HepG2 (cell line): ENCODE measurements at regions of chr3 and their contacts with region 1.

Region 1: GRCh38 chr3:49339945-49340800 is at the start of gene USP4:
- DNase-seq: peak; percentile 89
- ATAC-seq: peak; percentile 92
- H3K4me3 ChIP-seq: peak within 1 kb of the TSS; percentile 76 to 90 (median 82)
- H3K27ac ChIP-seq: peak within 1 kb of the TSS; percentile 93
- H3K4me1 ChIP-seq: peaks cover 44% of the 10 kb centered on the region
- H3K27me3 ChIP-seq: no peaks in the 10 kb centered on the region
- CTCF ChIP-seq: peak; percentile 84
- EP300 ChIP-seq: peak in 1 of 2 experiments; percentile 16; a peak in 1 of 4 replicates
- POLR2A ChIP-seq: peak; percentile 63 to 78
- RAD21 ChIP-seq: peak; percentile 79
- total RNA-seq, gene USP4: 9.2 and 12.1 TPM in 2 replicates

Region 2: GRCh38 chr3:49171119-49171774 is 168.9 kb before region 1 on chr3 and contains the start of gene KLHDC8B:
- CTCF ChIA-PET with region 1: interaction called, 5 read pairs
- POLR2A ChIA-PET with region 1: interaction called, 19 read pairs
- in situ Hi-C with region 1: no loop called
- intact Hi-C with region 1: no loop called
- DNase-seq: peak; percentile 82
- ATAC-seq: peak; percentile 82
- H3K4me3 ChIP-seq: peak within 1 kb of the TSS; percentile 80 to 89 (median 80)
- H3K27ac ChIP-seq: peak within 1 kb of the TSS; percentile 60
- H3K4me1 ChIP-seq: peaks cover 60% of the 10 kb centered on the region
- H3K27me3 ChIP-seq: no peaks in the 10 kb centered on the region; a peak in 1 of 5 replicates
- CTCF ChIP-seq: peak; percentile 93
- EP300 ChIP-seq: no peak
- POLR2A ChIP-seq: no peak
- RAD21 ChIP-seq: peak; percentile 90
- total RNA-seq, gene KLHDC8B: 17.2 and 17.7 TPM in 2 replicates

Region 3: DNA sequence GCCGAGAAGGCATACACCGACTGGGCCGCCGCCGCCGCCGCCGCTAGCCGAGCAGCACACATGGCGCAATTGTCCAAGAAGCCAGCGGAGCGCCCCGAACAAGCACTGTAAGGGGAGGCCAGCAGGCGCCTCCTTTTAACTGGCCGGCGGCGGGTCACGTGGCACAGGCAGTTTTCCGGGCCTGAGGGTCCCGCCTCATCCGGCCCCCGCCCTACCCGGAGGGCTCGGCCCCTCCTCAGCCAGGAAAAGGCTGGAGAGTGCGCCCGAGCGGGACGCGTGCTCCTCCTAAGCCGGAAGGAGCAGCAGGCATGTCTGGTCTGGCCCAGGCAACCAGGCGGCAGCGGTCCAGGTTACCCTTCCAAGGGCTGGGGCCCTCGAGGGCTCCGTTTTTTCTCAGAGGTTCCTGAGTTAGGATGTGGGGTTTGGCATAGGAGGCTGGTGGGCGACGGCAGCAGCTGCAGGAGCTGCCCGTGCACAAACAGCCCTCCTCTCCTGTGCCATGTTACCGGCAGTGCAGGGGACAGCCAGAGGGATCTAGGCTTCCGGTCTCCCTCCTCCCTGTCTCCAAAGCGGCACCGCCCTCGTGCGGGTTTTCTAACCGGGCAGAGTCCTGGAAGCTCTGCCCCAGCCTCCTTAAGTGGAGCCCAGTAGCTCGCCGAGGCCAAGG is 18.2 kb after region 1 on chr3 and contains the start of gene GPX1:
- CTCF ChIA-PET with region 1: interaction called, 6 read pairs
- POLR2A ChIA-PET with region 1: interaction called, 134 read pairs
- in situ Hi-C with region 1: no loop called
- intact Hi-C with region 1: loop called (anchors 1 kb)
- DNase-seq: peak; percentile 92
- ATAC-seq: peak; percentile 93
- H3K4me3 ChIP-seq: peak within 1 kb of the TSS; percentile 62 to 73 (median 63)
- H3K27ac ChIP-seq: peak within 1 kb of the TSS; percentile 94
- H3K4me1 ChIP-seq: peaks cover 37% of the 10 kb centered on the region
- H3K27me3 ChIP-seq: no peaks in the 10 kb centered on the region
- CTCF ChIP-seq: peak; percentile 32; the same call in 1 of the 2 replicates
- EP300 ChIP-seq: no peak
- POLR2A ChIP-seq: peak; percentile 86
- RAD21 ChIP-seq: peak; percentile 32; the same call in 1 of the 2 replicates
- total RNA-seq, gene GPX1: 149 and 169 TPM in 2 replicates

Region 4: DNA sequence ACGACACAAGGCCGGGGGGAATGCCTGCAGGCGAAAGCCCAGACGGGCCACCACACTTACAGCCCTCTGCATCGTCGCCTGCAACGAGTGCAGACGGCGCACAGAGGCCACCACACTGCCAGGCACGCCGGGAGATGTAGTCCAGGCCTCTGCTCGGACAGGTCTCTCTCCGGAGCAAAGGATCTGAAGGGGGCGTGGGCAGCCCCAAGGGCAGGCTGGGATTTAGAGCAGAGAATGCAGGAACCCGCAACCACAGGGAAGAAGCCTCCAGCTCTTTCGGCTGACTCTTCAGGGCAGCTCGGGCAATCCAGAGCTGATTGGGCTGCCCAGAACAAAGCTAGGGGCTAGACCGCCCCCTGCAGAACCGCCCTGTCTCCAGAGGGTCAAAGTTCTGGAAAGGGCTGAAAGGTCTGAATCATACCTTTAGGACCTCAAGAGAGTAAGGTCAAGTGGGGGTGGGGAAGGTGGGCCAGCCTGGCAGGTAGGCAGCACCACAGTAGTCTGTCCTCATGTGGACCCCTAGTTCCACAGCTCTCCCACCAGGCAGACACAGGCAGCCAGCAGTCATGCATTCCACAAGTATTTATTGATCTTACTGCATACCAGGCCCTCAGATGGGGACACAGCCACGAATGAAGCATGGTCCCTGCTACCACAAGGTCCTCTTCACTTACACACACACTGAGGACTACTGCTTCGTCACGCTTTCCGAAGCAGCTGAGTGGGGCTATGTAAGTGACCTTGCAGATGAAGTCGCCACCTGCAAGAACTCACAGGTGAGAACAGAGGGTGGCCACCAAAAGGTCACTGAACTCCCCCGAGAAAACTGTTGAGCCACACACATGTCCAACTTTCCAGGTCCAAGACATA is 82.4 kb after region 1 on chr3 and contains the start of gene AMT:
- CTCF ChIA-PET with region 1: interaction called, 3 read pairs
- POLR2A ChIA-PET with region 1: interaction called, 33 read pairs
- in situ Hi-C with region 1: loop called (anchors 25 kb)
- intact Hi-C with region 1: no loop called
- DNase-seq: peak; percentile 83
- ATAC-seq: peak; percentile 91
- H3K4me3 ChIP-seq: peak within 1 kb of the TSS; percentile 60 to 89 (median 64)
- H3K27ac ChIP-seq: peak within 1 kb of the TSS; percentile 89
- H3K4me1 ChIP-seq: peaks cover 55% of the 10 kb centered on the region
- H3K27me3 ChIP-seq: no peaks in the 10 kb centered on the region
- CTCF ChIP-seq: peak; percentile 30; the same call in 1 of the 2 replicates
- EP300 ChIP-seq: peak in 1 of 2 experiments; percentile 47; a peak in 2 of 4 replicates
- POLR2A ChIP-seq: peak; percentile 61 to 75; a peak in 2 of 4 replicates
- RAD21 ChIP-seq: no peak; the same call in 1 of the 2 replicates
- total RNA-seq, gene AMT: 32.5 and 35.3 TPM in 2 replicates

Region 5: DNA sequence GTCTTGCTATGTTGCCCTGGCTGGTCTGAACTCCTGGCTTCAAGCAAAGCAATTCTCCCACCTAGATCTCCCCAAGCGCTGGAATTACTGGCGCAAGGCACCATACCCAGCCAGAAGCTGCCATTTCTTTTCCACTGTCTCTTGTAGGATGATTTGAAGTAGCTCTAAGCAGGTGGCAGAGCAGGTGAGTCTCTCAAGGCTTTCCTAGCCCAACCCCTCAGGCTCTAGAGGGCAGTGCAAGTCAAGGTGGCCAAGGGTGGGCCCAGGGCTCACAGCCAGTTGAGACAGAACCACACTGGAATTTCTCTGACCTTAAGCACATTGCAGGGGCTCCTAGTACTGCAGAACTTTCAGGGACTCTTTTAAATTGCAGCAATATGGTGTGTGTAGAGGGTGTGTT is 114.3 kb after region 1 on chr3:
- CTCF ChIA-PET with region 1: interaction called, 7 read pairs
- POLR2A ChIA-PET with region 1: interaction called, 18 read pairs
- in situ Hi-C with region 1: loop called (anchors 25 kb)
- intact Hi-C with region 1: loop called (anchors 1 kb)
- DNase-seq: peak; percentile 66
- ATAC-seq: peak; percentile 91
- H3K4me3 ChIP-seq: no peak overlapping the region
- H3K27ac ChIP-seq: no peak overlapping the region
- H3K4me1 ChIP-seq: peaks cover 46% of the 10 kb centered on the region
- H3K27me3 ChIP-seq: no peaks in the 10 kb centered on the region
- CTCF ChIP-seq: peak; percentile 90
- EP300 ChIP-seq: no peak
- POLR2A ChIP-seq: no peak
- RAD21 ChIP-seq: peak; percentile 63